PC-3 (cell line): ENCODE measurements at regions of chr4 and their contacts with region 1.

Region 1: DNA sequence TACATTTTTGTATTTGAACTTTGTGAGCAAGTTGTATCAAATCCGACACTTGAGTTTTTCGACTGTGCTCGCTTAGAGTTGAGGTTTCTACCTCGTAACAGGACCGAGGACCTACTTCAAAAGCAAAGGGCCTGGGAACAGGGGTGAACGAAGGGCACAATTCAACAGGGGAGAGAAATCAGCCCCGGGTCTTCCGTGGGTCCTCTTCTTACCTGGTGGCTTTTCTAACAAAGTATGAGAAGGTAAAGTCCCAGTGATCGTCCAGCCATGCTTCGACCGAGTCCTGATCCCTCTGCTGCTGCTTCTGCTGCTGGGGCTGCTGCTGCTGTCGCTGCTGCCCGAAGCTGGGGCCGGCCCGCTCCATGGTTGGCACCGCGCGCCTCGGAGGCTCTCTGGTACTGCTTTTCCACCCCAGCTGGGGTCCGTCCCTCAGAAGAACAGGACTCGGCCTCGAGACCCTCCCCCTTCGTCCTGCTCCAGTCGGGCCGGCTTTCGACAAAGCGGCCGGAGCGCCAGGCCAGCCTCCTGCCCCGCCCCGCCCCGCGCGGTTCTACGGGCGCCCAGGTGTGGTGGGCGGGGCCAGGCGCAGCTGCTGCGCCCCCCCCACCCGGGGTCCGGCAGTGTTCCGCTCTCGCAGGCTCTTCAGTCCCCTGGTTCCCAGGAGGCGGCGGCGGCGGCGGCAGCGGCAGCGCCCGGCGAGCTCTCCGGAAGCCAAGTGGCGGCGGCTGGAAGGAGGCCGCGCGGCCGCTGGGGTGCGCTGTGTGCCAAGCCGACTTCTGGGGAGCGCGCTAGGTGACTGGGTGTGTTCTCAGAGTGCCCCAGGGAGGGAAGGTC is at the start of gene PDE5A:
- DNase-seq: peak; percentile 87
- ATAC-seq: peak; percentile 75
- H3K4me3 ChIP-seq: peak within 1 kb of the TSS; percentile 98
- H3K27ac ChIP-seq: 0 out of 2 replicates have a peak within 1 kb of the TSS, but pooled peaks have one; percentile 18
- H3K4me1 ChIP-seq: peaks cover 24% of the 10 kb centered on the region
- H3K27me3 ChIP-seq: no peaks in the 10 kb centered on the region
- CTCF ChIP-seq: peak; percentile 69
- total RNA-seq, gene PDE5A: 8.1 and 11.5 TPM in 2 replicates

Region 2: GRCh38 chr4:119314356-119314755 is 314.2 kb before region 1 on chr4:
- CTCF ChIA-PET with region 1: no interaction called
- POLR2A ChIA-PET with region 1: no interaction called
- intact Hi-C with region 1: loop called (anchors 2 kb)
- DNase-seq: peak; percentile 59
- ATAC-seq: peak; percentile 88
- H3K4me3 ChIP-seq: no peak overlapping the region
- H3K27ac ChIP-seq: no peak overlapping the region
- H3K4me1 ChIP-seq: no peaks in the 10 kb centered on the region
- H3K27me3 ChIP-seq: no peaks in the 10 kb centered on the region
- CTCF ChIP-seq: peak; percentile 63

Region 3: DNA sequence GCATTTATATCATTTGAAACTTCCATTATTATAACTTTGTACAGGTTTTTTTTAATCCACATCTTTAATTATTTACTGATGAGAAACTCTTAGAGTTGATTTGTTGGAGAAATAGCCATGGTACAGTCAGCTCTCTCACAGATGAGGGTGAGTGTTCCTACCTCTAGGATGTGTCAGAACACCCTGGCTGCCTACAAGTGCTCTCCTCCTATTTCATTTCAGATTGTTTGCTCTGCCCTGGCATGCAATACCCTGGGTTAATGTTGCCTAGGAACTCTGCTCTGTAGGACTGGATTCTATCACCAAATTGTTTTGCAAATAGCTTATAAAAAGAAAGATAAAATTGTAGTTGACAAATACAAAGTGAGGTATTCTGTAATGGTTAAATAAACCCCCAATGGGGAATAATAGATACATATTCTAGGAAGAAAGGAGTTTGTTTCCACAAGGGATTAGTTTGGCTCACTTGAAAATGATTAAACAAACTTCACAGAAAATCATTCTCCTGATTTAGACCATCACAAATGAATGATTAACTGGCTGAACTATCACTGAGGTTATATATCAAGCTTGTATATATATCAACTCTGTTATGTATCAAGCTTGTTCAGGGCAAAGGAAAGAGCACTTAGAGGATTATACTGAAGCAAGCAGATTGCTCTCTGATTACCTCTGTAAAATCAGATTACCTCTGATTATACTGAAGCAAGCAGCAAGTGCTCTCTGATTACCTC is 149.9 kb before region 1 on chr4:
- CTCF ChIA-PET with region 1: no interaction called
- POLR2A ChIA-PET with region 1: no interaction called
- intact Hi-C with region 1: no loop called
- DNase-seq: no peak
- ATAC-seq: no peak
- H3K4me3 ChIP-seq: no peak overlapping the region
- H3K27ac ChIP-seq: no peak overlapping the region
- H3K4me1 ChIP-seq: no peaks in the 10 kb centered on the region
- H3K27me3 ChIP-seq: no peaks in the 10 kb centered on the region
- CTCF ChIP-seq: no peak

Region 4: GRCh38 chr4:119683518-119683917 is 55.0 kb after region 1 on chr4:
- CTCF ChIA-PET with region 1: interaction called, 3 read pairs
- POLR2A ChIA-PET with region 1: no interaction called
- intact Hi-C with region 1: loop called (anchors 2 kb)
- DNase-seq: peak; percentile 73
- ATAC-seq: peak; percentile 84
- H3K4me3 ChIP-seq: no peak overlapping the region
- H3K27ac ChIP-seq: no peak overlapping the region
- H3K4me1 ChIP-seq: peaks cover 40% of the 10 kb centered on the region
- H3K27me3 ChIP-seq: no peaks in the 10 kb centered on the region
- CTCF ChIP-seq: no peak

Region 5: DNA sequence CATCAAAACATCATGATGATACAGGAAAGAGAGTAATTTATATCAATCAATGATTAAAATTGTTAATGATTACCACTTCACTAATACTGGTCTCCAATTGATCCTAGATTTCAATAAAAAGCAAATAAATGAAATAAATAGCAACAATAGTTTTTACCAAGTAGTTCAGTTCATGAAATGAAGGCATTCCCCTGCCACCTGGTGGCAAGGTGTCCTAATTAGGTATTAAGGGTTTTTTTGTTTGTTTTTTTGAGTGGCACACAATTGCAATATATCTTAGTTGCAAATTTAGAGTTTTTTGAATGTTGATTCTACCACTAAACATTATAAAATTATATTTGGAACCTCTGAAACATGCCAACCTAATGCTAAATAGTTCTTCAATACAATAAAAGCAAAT is 157.4 kb after region 1 on chr4:
- CTCF ChIA-PET with region 1: interaction called, 3 read pairs
- POLR2A ChIA-PET with region 1: no interaction called
- intact Hi-C with region 1: loop called (anchors 1 kb)
- DNase-seq: peak; percentile 44
- ATAC-seq: peak; percentile 29; the same call in 1 of the 2 replicates
- H3K4me3 ChIP-seq: no peak overlapping the region
- H3K27ac ChIP-seq: no peak overlapping the region
- H3K4me1 ChIP-seq: peaks cover 3% of the 10 kb centered on the region; the same call in 1 of the 2 replicates
- H3K27me3 ChIP-seq: no peaks in the 10 kb centered on the region
- CTCF ChIP-seq: peak; percentile 70

Region 6: DNA sequence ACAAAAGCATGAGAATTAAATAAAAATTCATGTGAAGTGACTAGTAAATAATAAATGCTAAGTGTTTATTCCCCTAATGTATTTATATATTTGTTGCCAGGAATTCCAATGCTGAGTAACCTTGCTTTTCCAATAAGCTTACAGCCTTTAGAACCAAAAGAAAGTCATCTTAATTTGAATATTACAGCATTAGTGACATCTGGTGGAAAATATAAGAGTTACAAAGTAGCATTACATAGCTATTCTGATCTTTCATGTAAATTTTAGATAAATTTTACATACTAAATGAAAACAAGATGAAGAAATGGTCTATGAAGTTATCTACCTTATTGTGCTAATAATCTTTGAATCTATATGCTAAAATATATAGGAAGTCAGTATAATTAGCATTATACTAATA is 427.7 kb after region 1 on chr4:
- CTCF ChIA-PET with region 1: interaction called, 10 read pairs
- POLR2A ChIA-PET with region 1: interaction called, 3 read pairs
- intact Hi-C with region 1: loop called (anchors 2 kb)
- DNase-seq: peak; percentile 35
- ATAC-seq: peak; percentile 42; the same call in 1 of the 2 replicates
- H3K4me3 ChIP-seq: no peak overlapping the region
- H3K27ac ChIP-seq: no peak overlapping the region
- H3K4me1 ChIP-seq: peaks cover 10% of the 10 kb centered on the region; the same call in 1 of the 2 replicates
- H3K27me3 ChIP-seq: no peaks in the 10 kb centered on the region
- CTCF ChIP-seq: peak; percentile 44